HEK293 (cell line): ENCODE measurements at regions of chr19 and their contacts with region 1.

Region 1: GRCh38 chr19:48637170-48637947 is at the start of gene DBP:
- H3K4me3 ChIP-seq: peak within 1 kb of the TSS; percentile 42
- H3K27ac ChIP-seq: peak within 1 kb of the TSS; percentile 85
- H3K4me1 ChIP-seq: peaks cover 23% of the 10 kb centered on the region
- CTCF ChIP-seq: no peak; the same call in 1 of the 2 replicates

Region 2: GRCh38 chr19:48624067-48624594 is 13.2 kb before region 1 on chr19:
- CTCF ChIA-PET with region 1: interaction called, 3 read pairs
- POLR2A ChIA-PET with region 1: interaction called, 97 read pairs
- H3K4me3 ChIP-seq: peak overlapping the region; percentile 51
- H3K27ac ChIP-seq: peak overlapping the region; percentile 51
- H3K4me1 ChIP-seq: peaks cover 10% of the 10 kb centered on the region
- CTCF ChIP-seq: no peak

Region 3: GRCh38 chr19:48654299-48655059 is 17.1 kb after region 1 on chr19:
- CTCF ChIA-PET with region 1: no interaction called
- POLR2A ChIA-PET with region 1: no interaction called
- H3K4me3 ChIP-seq: no peak overlapping the region
- H3K27ac ChIP-seq: peak overlapping the region; percentile 61
- H3K4me1 ChIP-seq: peaks cover 9% of the 10 kb centered on the region
- CTCF ChIP-seq: no peak

Region 4: GRCh38 chr19:48720613-48721296 is 83.4 kb after region 1 on chr19:
- CTCF ChIA-PET with region 1: no interaction called
- POLR2A ChIA-PET with region 1: no interaction called
- H3K4me3 ChIP-seq: peak overlapping the region; percentile 74
- H3K27ac ChIP-seq: peak overlapping the region; percentile 75
- H3K4me1 ChIP-seq: no peaks in the 10 kb centered on the region; the same call in 1 of the 2 replicates
- CTCF ChIP-seq: no peak